ENCODE measurements at regions of chr1 and their contacts with region 1.

Region 1: GRCh38 chr1:26787706-26788514 is at the start of gene PIGV:
- DNase-seq: peak; percentile 91
- ATAC-seq: peak; percentile 70
- H3K4me3 Mint-ChIP-seq: peak within 1 kb of the TSS; percentile 84
- H3K27ac Mint-ChIP-seq: peak within 1 kb of the TSS; percentile 100
- H3K4me1 Mint-ChIP-seq: peaks cover 84% of the 10 kb centered on the region
- H3K27me3 Mint-ChIP-seq: no peaks in the 10 kb centered on the region
- total RNA-seq, gene PIGV: 19.9 to 20.3 TPM

Region 2: DNA sequence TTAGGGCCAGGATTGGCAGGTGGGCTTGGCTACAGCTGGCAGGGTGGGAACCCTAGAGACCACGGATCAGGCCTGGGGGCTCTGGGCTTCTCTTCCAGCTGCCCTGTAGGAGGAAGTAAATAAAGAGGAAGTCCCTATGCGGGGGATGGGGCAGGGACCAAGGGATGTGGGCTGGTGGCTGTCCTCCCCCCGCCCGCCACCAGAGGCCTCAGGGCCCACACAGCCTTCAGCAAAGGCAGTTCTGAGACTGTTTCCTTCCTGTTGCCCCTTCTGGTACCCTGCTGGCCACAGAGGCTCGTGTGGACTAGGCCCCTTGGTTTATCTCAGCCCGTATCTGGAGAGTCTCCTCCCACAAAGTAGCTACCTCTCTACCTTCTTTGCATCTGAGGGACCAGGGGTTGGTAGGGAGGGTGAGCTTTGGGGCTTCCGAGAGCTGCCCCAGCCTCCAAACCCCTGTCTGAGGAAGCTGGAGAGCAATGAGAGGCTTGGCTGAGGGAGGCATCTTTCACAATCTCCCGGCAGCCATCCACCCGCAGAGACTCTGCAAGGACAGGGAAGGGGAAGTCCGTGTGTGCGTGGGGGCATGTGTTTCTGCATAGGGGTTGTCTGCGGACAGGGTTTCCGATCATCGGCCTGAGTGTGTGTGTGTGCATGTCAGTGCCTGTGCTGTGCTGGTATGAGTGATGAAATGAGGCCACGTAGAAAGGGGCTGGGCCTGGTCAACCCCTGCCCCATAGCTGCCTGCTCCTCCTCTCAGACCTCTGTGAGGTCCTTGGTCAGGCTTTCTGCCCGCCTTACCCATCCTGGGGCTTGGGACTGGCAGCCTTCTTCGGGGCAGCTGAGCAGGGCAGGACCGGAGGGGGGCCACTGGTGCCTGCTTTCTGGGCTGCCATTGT is 245.8 kb before region 1 on chr1:
- CTCF ChIA-PET with region 1: interaction called, 44 read pairs
- POLR2A ChIA-PET with region 1: interaction called, 7 read pairs
- DNase-seq: peak; percentile 92
- ATAC-seq: peak; percentile 74
- H3K4me3 Mint-ChIP-seq: peak overlapping the region; percentile 85
- H3K27ac Mint-ChIP-seq: peak overlapping the region; percentile 99
- H3K4me1 Mint-ChIP-seq: peaks cover 93% of the 10 kb centered on the region
- H3K27me3 Mint-ChIP-seq: no peaks in the 10 kb centered on the region

Region 3: DNA sequence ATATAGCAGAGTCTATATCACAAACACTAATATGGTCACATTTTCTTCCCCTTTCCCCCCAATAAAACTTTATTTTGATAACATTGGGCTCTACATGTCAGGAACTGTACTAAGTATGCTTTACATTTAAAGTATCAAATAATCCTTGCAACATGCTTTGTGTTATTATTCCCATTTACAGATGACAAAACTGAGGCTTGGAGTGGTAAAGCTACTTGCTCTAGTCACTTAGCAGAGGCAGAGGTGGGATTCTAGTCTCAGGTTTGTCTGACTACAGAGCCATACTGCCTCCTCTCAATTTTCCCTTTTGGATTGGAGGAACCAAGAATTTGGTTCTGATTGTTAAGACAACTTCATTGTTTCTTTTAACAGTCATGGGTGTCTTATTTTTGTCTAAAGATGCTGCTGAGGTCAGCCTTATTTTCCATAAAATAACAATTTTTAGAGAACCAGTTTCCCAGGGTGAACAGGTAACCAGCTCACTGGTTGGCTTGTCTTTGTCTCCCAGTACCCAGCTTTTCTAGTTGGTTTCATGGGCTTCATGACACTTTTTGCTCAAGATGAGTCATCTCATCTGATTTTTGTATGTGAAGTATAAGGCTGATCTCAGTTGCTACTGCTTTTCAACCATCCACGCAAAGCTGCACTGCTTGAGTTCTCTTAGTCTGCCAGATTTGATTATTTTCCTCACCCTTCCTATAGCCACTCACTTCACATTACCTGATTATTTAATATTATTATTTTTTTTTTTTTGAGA is 173.1 kb before region 1 on chr1:
- CTCF ChIA-PET with region 1: interaction called, 334 read pairs
- POLR2A ChIA-PET with region 1: interaction called, 6 read pairs
- DNase-seq: no peak
- ATAC-seq: no peak
- H3K4me3 Mint-ChIP-seq: no peak overlapping the region
- H3K27ac Mint-ChIP-seq: no peak overlapping the region
- H3K4me1 Mint-ChIP-seq: peaks cover 17% of the 10 kb centered on the region
- H3K27me3 Mint-ChIP-seq: peaks cover 14% of the 10 kb centered on the region

Region 4: DNA sequence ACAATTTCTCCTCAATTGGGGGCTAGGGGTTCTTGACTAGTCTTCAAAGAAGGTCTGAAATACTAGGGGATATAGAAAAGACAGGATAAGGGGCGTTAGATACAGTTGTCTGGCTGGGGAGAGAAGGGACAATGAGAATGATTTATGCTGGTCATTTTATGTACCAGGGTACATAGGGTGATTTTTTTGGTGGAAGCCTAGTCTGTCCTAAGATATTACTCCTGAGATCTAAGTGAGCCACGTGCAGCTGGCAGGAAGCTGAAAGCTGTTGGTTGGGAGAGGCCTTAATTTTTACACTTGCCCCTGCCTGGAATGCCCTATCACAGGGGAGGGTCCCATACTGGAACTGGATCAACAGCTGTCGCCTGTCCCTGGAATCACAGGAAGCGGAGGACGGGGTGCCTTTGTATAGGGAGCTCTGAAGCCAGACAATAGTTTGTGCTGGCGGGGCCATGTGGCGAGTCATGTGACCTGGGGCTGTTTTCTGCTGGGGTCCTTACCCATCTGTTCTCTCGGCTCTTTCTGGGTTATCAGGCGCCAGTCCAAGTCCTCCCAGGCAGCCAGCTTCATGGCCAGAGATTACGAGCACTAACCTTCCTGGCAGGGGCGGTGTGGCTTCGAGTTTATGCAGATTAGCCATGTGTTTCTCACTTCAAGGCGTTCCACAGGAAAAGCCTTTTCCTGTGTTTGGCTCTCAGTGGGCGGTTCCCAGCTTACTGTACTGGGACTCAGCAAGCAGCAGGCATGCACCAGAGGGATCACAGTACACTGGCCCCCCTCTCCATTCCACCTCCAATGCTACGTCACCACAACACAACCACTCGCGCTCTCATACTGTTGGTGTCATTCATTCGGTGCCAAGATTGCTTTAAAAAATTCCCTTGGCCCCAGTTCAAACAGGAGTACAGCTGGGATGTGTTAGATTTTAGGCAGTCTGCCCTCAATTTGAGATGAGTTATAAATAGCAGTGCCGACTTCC is 64.6 kb before region 1 on chr1:
- CTCF ChIA-PET with region 1: interaction called, 33 read pairs
- POLR2A ChIA-PET with region 1: interaction called, 7 read pairs
- DNase-seq: peak; percentile 48
- ATAC-seq: peak; percentile 68
- H3K4me3 Mint-ChIP-seq: peak overlapping the region; percentile 42
- H3K27ac Mint-ChIP-seq: peak overlapping the region; percentile 56
- H3K4me1 Mint-ChIP-seq: peaks cover 86% of the 10 kb centered on the region
- H3K27me3 Mint-ChIP-seq: no peaks in the 10 kb centered on the region

Region 5: GRCh38 chr1:26799479-26800142 is 11.7 kb after region 1 on chr1:
- CTCF ChIA-PET with region 1: interaction called, 172 read pairs
- POLR2A ChIA-PET with region 1: interaction called, 111 read pairs
- DNase-seq: peak; percentile 54
- ATAC-seq: peak; percentile 76
- H3K4me3 Mint-ChIP-seq: peak overlapping the region; percentile 74
- H3K27ac Mint-ChIP-seq: peak overlapping the region; percentile 90
- H3K4me1 Mint-ChIP-seq: peaks cover 51% of the 10 kb centered on the region
- H3K27me3 Mint-ChIP-seq: no peaks in the 10 kb centered on the region

Region 6: DNA sequence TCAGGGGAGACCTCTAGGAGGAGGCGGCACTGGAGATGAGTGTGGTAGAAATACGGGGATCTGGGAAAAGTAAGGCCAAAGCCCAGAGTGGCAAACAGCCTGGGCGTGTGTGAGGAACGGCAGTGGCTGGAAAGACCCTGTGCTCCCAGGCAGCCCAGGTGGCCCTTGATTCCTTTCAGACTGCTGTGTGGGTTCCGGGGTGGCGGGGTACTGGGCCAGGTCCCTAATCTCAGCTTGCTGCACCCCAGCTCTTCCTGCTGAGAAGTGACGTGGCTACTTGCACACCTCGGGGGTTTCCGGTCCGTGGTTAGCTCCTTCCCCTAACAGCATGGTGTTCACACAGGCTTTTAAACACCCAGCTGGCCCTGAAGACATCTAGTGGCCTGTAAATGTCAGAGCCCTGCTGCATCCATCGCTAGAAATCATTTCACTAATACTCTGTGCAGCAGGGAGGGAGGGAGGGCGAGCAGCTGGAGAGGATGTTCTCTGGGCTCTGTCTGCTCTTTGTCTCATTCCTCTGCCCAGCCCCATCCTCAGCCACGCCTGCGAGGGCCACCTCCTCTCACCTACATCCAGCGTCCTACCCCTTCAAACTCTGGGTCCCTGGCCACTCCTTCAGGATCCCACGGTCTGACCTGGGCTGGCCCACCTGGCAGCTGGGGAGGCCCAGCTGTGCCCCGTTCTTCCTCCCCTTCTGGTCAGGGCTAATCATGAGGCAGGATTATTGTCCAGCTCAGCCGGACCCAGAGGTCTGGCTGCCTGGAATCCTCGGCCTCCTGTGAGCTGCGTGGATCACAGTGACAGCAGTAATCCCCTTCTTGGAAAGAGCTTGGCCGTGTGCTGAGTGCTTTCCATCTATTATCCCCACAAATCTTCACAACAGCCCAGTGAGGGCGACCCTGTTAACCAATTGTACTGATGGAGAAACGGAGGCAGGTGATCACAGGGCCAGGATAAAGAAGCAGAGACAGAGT is 45.8 kb after region 1 on chr1:
- CTCF ChIA-PET with region 1: interaction called, 66 read pairs
- POLR2A ChIA-PET with region 1: interaction called, 23 read pairs
- DNase-seq: peak; percentile 97
- ATAC-seq: peak; percentile 97
- H3K4me3 Mint-ChIP-seq: peak overlapping the region; percentile 69
- H3K27ac Mint-ChIP-seq: peak overlapping the region; percentile 98
- H3K4me1 Mint-ChIP-seq: peaks cover 65% of the 10 kb centered on the region
- H3K27me3 Mint-ChIP-seq: no peaks in the 10 kb centered on the region

Region 7: GRCh38 chr1:26999440-26999987 is 211.6 kb after region 1 on chr1:
- CTCF ChIA-PET with region 1: no interaction called
- POLR2A ChIA-PET with region 1: no interaction called
- DNase-seq: no peak
- ATAC-seq: no peak
- H3K4me3 Mint-ChIP-seq: no peak overlapping the region
- H3K27ac Mint-ChIP-seq: no peak overlapping the region
- H3K4me1 Mint-ChIP-seq: peaks cover 8% of the 10 kb centered on the region
- H3K27me3 Mint-ChIP-seq: peaks cover 38% of the 10 kb centered on the region

Measured in activated CD8-positive, alpha-beta T cell treated with anti-CD3 and anti-CD28 coated beads, Interleukin-2, amount 10 ng/mL, durations not matched to agents 7 days and 5 days (primary cell).